ENCODE measurements at regions of chr10 and their contacts with region 1.

Region 1: GRCh38 chr10:13939391-13939790 is 352.6 kb downstream of the PRPF18 start:
- DNase-seq: no peak
- H3K4me3 ChIP-seq: no peak overlapping the region
- H3K27ac ChIP-seq: no peak overlapping the region
- H3K4me1 ChIP-seq: peaks cover under 1% of the 10 kb centered on the region; the same call in 1 of the 2 replicates
- H3K27me3 ChIP-seq: no peaks in the 10 kb centered on the region
- CTCF ChIP-seq: no peak

Region 2: GRCh38 chr10:13556676-13557319 is 382.6 kb before region 1 on chr10:
- CTCF ChIA-PET with region 1: no interaction called
- POLR2A ChIA-PET with region 1: no interaction called
- intact Hi-C with region 1: no loop called
- DNase-seq: peak in 1 of 2 experiments; percentile 71
- H3K4me3 ChIP-seq: no peak overlapping the region
- H3K27ac ChIP-seq: no peak overlapping the region
- H3K4me1 ChIP-seq: 0 out of 2 replicates have a peak, but pooled peaks cover 7% of the 10 kb centered on the region
- H3K27me3 ChIP-seq: peaks cover 45% of the 10 kb centered on the region
- CTCF ChIP-seq: no peak

Region 3: GRCh38 chr10:13571541-13571940 is 367.9 kb before region 1 on chr10:
- CTCF ChIA-PET with region 1: no interaction called
- POLR2A ChIA-PET with region 1: no interaction called
- intact Hi-C with region 1: no loop called
- DNase-seq: no peak
- H3K4me3 ChIP-seq: no peak overlapping the region
- H3K27ac ChIP-seq: no peak overlapping the region
- H3K4me1 ChIP-seq: no peaks in the 10 kb centered on the region
- H3K27me3 ChIP-seq: peaks cover 50% of the 10 kb centered on the region
- CTCF ChIP-seq: no peak

Region 4: DNA sequence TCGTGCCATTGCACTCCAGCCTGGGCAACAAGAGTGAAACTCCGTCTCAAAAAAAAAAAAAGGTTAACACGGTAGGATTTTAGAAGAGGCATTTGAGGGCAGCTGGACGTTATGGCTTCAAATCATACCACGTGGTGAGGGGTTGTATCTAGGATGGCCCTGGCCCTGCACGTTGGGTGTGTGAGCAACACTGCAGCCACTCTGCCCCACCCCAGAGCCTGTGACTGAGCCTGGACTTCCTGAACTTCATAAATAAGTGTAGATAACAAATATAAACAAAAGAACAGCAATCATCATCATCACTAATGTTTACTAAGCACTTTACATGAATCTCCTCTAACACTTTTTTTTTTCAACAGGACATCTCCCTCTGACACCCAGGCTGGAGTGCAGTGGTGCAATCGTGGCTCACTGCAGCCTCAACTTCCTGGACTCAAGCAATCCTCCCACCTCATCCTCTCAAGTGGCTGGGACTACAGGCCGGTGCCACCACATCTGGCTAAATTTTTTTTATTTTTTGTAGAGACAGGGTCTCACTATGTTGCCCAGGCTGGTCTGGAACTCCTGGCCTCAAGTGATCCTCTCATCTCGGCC is 560.9 kb after region 1 on chr10:
- CTCF ChIA-PET with region 1: interaction called, 12 read pairs
- POLR2A ChIA-PET with region 1: no interaction called
- intact Hi-C with region 1: no loop called
- DNase-seq: peak in 1 of 2 experiments; percentile 46
- H3K4me3 ChIP-seq: no peak overlapping the region
- H3K27ac ChIP-seq: no peak overlapping the region
- H3K4me1 ChIP-seq: no peaks in the 10 kb centered on the region
- H3K27me3 ChIP-seq: no peaks in the 10 kb centered on the region
- CTCF ChIP-seq: no peak